ENCODE measurements at regions of chr1 and their contacts with region 1.

Region 1: GRCh38 chr1:36420836-36421664 is 23.3 kb upstream of the LSM10 start:
- DNase-seq: peak; percentile 86 to 90
- H3K4me3 ChIP-seq: no peak overlapping the region
- H3K27ac ChIP-seq: no peak overlapping the region
- H3K4me1 ChIP-seq: no peaks in the 10 kb centered on the region
- H3K27me3 ChIP-seq: no peaks in the 10 kb centered on the region
- CTCF ChIP-seq: peak; percentile 89 to 95 (median 92)
- POLR2A ChIP-seq: no peak

Region 2: GRCh38 chr1:36123356-36123755 is 297.7 kb before region 1 on chr1:
- intact Hi-C with region 1: loop called (anchors 10 kb)
- DNase-seq: no peak
- H3K4me3 ChIP-seq: no peak overlapping the region
- H3K27ac ChIP-seq: no peak overlapping the region
- H3K4me1 ChIP-seq: peaks cover 0 to 6% of the 10 kb centered on the region in 2 donors
- H3K27me3 ChIP-seq: peaks cover 0 to 3% of the 10 kb centered on the region in 2 donors
- CTCF ChIP-seq: no peak
- POLR2A ChIP-seq: no peak

Region 3: DNA sequence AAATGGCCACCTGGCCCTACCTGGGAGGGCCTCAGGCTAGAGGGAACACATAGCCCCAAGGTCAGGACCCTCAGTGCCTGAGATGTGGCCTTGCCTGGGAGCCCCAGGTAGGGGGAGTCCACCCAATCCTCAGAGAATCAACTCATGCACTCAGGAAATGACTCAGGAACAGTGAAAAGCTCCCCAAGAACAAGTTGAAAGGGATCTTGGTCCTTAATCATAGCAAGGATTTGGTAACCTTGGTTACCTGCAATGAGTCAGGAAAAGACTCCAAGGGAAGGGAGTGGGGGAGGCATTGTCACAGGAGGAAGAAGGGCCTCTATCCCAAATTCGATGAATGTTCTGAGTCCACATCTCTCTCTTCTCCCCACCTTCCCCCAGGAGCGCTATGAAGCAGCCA is 248.1 kb before region 1 on chr1:
- intact Hi-C with region 1: no loop called
- DNase-seq: no peak
- H3K4me3 ChIP-seq: no peak overlapping the region
- H3K27ac ChIP-seq: no peak overlapping the region
- H3K4me1 ChIP-seq: peaks cover 0 to 4% of the 10 kb centered on the region in 2 donors
- H3K27me3 ChIP-seq: no peaks in the 10 kb centered on the region
- CTCF ChIP-seq: no peak
- POLR2A ChIP-seq: no peak

Region 4: GRCh38 chr1:36342481-36343478 is 78.3 kb before region 1 on chr1:
- intact Hi-C with region 1: loop called (anchors 5 kb)
- DNase-seq: peak; percentile 40 to 43
- H3K4me3 ChIP-seq: no peak overlapping the region
- H3K27ac ChIP-seq: no peak overlapping the region
- H3K4me1 ChIP-seq: no peaks in the 10 kb centered on the region
- H3K27me3 ChIP-seq: no peaks in the 10 kb centered on the region
- CTCF ChIP-seq: peak; percentile 36 to 73 (median 58)
- POLR2A ChIP-seq: no peak

Region 5: GRCh38 chr1:36352948-36353878 is 67.8 kb before region 1 on chr1:
- intact Hi-C with region 1: no loop called
- DNase-seq: no peak
- H3K4me3 ChIP-seq: no peak overlapping the region
- H3K27ac ChIP-seq: no peak overlapping the region
- H3K4me1 ChIP-seq: no peaks in the 10 kb centered on the region
- H3K27me3 ChIP-seq: no peaks in the 10 kb centered on the region
- CTCF ChIP-seq: no peak
- POLR2A ChIP-seq: no peak

Measured in uterus (tissue), 4 donors.